IMR-90 (cell line): ENCODE measurements at regions of chr6 and their contacts with region 1.

Region 1: DNA sequence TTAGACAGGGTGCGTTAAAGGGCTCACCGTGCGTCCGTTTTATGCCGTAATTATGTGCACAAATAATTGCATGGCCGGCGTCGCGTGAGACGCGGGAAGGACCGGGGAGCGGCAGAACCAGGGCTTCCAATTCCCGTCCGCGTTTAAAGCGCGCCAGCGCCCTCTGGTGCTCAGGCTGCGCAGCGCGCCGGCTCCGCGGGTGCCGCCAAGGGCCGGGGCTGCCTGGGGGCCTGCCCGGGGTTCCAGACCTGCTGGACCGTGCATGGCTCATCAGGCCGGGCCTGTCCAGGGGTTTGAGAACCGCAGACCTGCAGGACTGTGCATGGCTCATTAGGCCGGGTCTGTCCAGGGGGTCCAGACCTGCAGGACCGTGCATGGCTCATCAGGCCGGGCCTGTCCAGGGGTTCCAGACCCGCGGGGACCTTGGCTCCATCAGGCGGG is 369.0 kb downstream of the THBS2 start:
- DNase-seq: peak; percentile 5
- ATAC-seq: peak; percentile 87
- H3K4me3 ChIP-seq: no peak overlapping the region
- H3K27ac ChIP-seq: no peak overlapping the region
- H3K4me1 ChIP-seq: no peaks in the 10 kb centered on the region
- H3K27me3 ChIP-seq: no peaks in the 10 kb centered on the region; the same call in 1 of the 2 replicates
- CTCF ChIP-seq: peak; percentile 53
- POLR2A ChIP-seq: no peak
- RAD21 ChIP-seq: peak; percentile 59

Region 2: DNA sequence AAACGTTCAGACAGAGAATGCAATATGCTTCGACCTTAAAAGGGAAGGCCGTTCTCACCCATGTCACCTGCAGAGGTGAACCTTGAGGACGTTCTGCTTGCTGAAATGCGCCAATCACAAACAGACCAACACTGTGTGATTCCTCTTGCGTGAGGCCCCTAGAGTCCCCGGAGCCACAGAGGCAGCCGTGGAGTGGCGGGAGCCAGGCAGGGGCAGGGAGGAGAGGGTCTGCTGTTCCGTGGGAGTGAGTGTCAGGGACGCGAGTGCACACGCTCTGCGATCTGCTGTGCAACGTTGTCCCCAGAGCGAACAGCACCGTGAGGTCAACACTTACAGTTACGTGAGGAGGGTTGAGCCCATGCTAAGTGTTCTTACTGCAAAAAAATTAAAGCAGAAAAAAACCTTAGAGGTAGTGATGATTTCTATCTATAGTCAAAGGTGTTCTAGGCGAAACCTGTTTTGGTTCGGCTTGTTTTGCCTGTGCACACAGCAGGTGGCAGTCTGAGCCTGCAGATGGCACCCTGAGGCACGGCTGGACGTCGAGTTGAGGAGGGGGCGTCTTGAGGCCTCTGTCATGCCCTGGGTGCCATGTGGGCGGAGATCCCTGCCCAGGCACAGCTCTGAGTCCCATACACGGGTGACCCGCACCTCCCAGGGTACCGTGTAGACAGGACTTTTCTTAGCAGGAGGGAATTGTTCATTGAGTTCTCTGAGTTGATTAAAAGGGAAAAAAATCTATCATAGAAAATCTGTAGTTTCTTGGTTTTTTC is 733.9 kb before region 1 on chr6:
- CTCF ChIA-PET with region 1: no interaction called
- POLR2A ChIA-PET with region 1: no interaction called
- dilution Hi-C with region 1: no loop called
- in situ Hi-C with region 1: no loop called
- intact Hi-C with region 1: loop called (anchors 2 kb)
- DNase-seq: no peak
- ATAC-seq: no peak; the same call in 1 of the 2 replicates
- H3K4me3 ChIP-seq: no peak overlapping the region
- H3K27ac ChIP-seq: no peak overlapping the region
- H3K4me1 ChIP-seq: no peaks in the 10 kb centered on the region
- H3K27me3 ChIP-seq: peaks cover 6% of the 10 kb centered on the region; the same call in 1 of the 2 replicates
- CTCF ChIP-seq: no peak
- POLR2A ChIP-seq: no peak
- RAD21 ChIP-seq: peak; percentile 32

Region 3: DNA sequence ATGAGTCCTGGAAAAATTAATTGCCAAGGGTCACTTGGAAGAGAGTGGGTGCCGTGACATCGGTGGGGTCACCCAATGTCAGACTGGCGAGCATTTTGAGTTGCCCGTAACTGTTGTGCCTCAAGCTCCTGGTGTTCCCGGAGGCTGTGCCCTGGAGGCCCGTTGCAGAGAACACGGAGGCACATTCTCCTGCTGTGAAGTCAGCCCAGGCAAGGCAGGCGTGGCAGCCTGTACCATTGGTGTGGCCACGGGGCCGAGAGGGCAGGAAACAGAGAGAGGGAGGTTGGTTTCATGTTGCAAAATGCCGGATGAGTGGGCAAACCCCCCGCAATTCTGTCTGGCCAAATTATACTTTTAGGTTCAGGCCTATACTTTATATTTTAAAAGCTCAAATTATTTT is 287.8 kb after region 1 on chr6:
- CTCF ChIA-PET with region 1: no interaction called
- POLR2A ChIA-PET with region 1: no interaction called
- dilution Hi-C with region 1: no loop called
- in situ Hi-C with region 1: no loop called
- intact Hi-C with region 1: no loop called
- DNase-seq: peak; percentile 55
- ATAC-seq: peak; percentile 37
- H3K4me3 ChIP-seq: no peak overlapping the region
- H3K27ac ChIP-seq: peak overlapping the region; percentile 10; the same call in 1 of the 2 replicates
- H3K4me1 ChIP-seq: peaks cover 12% of the 10 kb centered on the region
- H3K27me3 ChIP-seq: no peaks in the 10 kb centered on the region
- CTCF ChIP-seq: no peak
- POLR2A ChIP-seq: no peak
- RAD21 ChIP-seq: no peak